PC-9 (cell line): ENCODE measurements at regions of chr3 and their contacts with region 1.

Region 1: GRCh38 chr3:22244761-22245521 is 493.9 kb upstream of the ZNF385D start:
- DNase-seq: peak; percentile 55
- H3K4me3 ChIP-seq: no peak overlapping the region
- H3K27ac ChIP-seq: peak overlapping the region; percentile 30
- H3K4me1 ChIP-seq: 0 out of 2 replicates have a peak, but pooled peaks cover 10% of the 10 kb centered on the region
- H3K27me3 ChIP-seq: no peaks in the 10 kb centered on the region
- CTCF ChIP-seq: no peak

Region 2: GRCh38 chr3:22263042-22263441 is 18.1 kb after region 1 on chr3:
- CTCF ChIA-PET with region 1: no interaction called
- POLR2A ChIA-PET with region 1: interaction called, 15 read pairs
- intact Hi-C with region 1: loop called (anchors 2 kb)
- DNase-seq: peak; percentile 37 to 45
- H3K4me3 ChIP-seq: no peak overlapping the region
- H3K27ac ChIP-seq: no peak overlapping the region
- H3K4me1 ChIP-seq: peaks cover 11% of the 10 kb centered on the region; the same call in 1 of the 2 replicates
- H3K27me3 ChIP-seq: no peaks in the 10 kb centered on the region
- CTCF ChIP-seq: no peak